ENCODE measurements at regions of chr20 and their contacts with region 1.

Region 1: DNA sequence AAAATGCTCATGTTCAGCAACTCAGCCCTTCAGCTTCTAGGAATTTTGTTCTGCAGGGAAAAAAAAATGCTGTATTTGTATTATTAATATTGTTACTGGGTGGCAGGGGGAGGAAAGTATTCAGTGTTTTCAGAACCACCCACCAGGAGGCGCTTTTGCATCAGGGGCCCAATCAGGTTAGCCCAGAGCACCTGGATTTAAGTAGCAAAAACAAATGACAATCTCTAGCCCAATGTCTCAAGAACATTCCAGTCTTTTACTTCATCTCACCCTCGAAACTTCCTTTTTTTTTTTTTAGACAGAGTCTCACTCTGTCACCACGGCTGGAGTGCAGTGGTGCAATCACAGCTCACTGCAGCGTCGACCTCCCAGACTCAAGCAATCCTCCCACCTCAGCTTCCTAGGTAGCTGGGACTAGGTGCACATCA is 635 bp upstream of the C20orf203 start:
- DNase-seq: peak; percentile 82
- ATAC-seq: peak; percentile 55
- H3K4me3 Mint-ChIP-seq: no peak overlapping the region
- H3K27ac Mint-ChIP-seq: peak overlapping the region; percentile 8
- H3K4me1 Mint-ChIP-seq: peaks cover 29% of the 10 kb centered on the region
- H3K27me3 Mint-ChIP-seq: no peaks in the 10 kb centered on the region

Region 2: GRCh38 chr20:32521780-32522525 is 152.4 kb before region 1 on chr20:
- CTCF ChIA-PET with region 1: interaction called, 19 read pairs
- DNase-seq: peak; percentile 70
- ATAC-seq: peak; percentile 88
- H3K4me3 Mint-ChIP-seq: no peak overlapping the region
- H3K27ac Mint-ChIP-seq: peak overlapping the region; percentile 59
- H3K4me1 Mint-ChIP-seq: peaks cover 52% of the 10 kb centered on the region
- H3K27me3 Mint-ChIP-seq: no peaks in the 10 kb centered on the region

Region 3: GRCh38 chr20:32652739-32653526 is 21.4 kb before region 1 on chr20:
- CTCF ChIA-PET with region 1: interaction called, 14 read pairs
- DNase-seq: peak; percentile 89
- ATAC-seq: peak; percentile 99
- H3K4me3 Mint-ChIP-seq: no peak overlapping the region
- H3K27ac Mint-ChIP-seq: no peak overlapping the region
- H3K4me1 Mint-ChIP-seq: peaks cover 11% of the 10 kb centered on the region
- H3K27me3 Mint-ChIP-seq: no peaks in the 10 kb centered on the region

Region 4: GRCh38 chr20:32661820-32662528 is 12.4 kb before region 1 on chr20:
- CTCF ChIA-PET with region 1: interaction called, 16 read pairs
- DNase-seq: no peak
- ATAC-seq: no peak
- H3K4me3 Mint-ChIP-seq: no peak overlapping the region
- H3K27ac Mint-ChIP-seq: no peak overlapping the region
- H3K4me1 Mint-ChIP-seq: no peaks in the 10 kb centered on the region
- H3K27me3 Mint-ChIP-seq: no peaks in the 10 kb centered on the region

Region 5: GRCh38 chr20:32727683-32728082 is 53.3 kb after region 1 on chr20:
- CTCF ChIA-PET with region 1: no interaction called
- DNase-seq: no peak
- ATAC-seq: no peak
- H3K4me3 Mint-ChIP-seq: no peak overlapping the region
- H3K27ac Mint-ChIP-seq: no peak overlapping the region
- H3K4me1 Mint-ChIP-seq: peaks cover 6% of the 10 kb centered on the region
- H3K27me3 Mint-ChIP-seq: no peaks in the 10 kb centered on the region

Region 6: DNA sequence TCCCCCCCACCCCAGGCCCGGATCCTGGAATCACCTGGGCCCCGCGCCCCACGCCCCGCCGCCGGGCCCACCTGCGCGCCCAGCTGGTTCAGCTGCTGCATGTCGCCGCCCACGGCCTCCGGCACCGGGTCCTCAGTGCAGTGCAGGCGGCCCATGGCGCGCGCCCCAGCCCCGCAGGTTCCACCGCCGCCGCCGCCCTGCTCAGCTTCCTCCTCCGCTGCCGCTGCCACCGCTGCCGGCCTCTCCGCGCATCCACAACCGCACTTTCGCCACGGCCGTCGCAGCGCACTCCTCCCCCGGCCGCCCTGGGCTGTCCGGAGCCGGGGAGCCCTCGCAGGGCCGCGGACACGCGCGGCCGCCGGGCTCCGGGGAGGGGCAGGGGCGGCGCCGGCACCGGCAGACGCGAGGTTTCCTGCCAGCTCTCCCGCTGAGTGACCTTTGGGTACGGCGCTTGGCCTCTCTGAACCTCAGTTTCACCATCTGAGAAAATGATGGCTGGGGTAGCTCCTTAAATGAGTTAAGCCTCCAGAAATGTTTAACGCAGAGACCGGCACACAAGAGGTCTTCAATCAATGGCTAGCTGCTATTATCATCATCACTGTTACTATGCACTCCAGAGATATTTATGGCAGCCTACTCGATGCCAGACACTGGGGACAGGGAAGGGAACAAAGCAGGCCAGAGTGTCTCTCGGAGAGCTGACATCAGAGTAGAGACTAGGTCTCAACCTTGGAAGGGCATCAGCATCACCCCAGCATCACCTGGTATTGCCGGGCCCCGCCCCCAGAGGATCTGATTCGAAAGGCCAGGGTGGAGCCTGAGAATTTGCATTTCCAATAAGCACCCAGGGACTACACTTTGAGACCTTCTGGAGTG is 69.1 kb after region 1 on chr20 and contains the start of gene COMMD7:
- CTCF ChIA-PET with region 1: interaction called, 30 read pairs
- DNase-seq: peak; percentile 87
- ATAC-seq: peak; percentile 84
- H3K4me3 Mint-ChIP-seq: peak within 1 kb of the TSS; percentile 99
- H3K27ac Mint-ChIP-seq: peak within 1 kb of the TSS; percentile 99
- H3K4me1 Mint-ChIP-seq: peaks cover 38% of the 10 kb centered on the region
- H3K27me3 Mint-ChIP-seq: no peaks in the 10 kb centered on the region
- total RNA-seq, gene COMMD7: 54.2 to 59.5 TPM

Region 7: GRCh38 chr20:32762149-32762753 is 87.9 kb after region 1 on chr20 and contains the start of gene DNMT3B:
- CTCF ChIA-PET with region 1: interaction called, 22 read pairs
- DNase-seq: peak; percentile 83
- ATAC-seq: peak; percentile 86
- H3K4me3 Mint-ChIP-seq: peak within 1 kb of the TSS; percentile 75
- H3K27ac Mint-ChIP-seq: peak within 1 kb of the TSS; percentile 66
- H3K4me1 Mint-ChIP-seq: peaks cover 18% of the 10 kb centered on the region
- H3K27me3 Mint-ChIP-seq: peaks cover 9% of the 10 kb centered on the region
- total RNA-seq, gene DNMT3B: 3.3 to 4.7 TPM

Measured in activated CD8-positive, alpha-beta memory T cell treated with anti-CD3 and anti-CD28 coated beads, Interleukin-2, amount 10 ng/mL, durations not matched to agents 7 days and 5 days (primary cell).